Activated naive CD4-positive, alpha-beta T cell treated with anti-CD3 and anti-CD28 coated beads for 36 hours (primary cell): ENCODE measurements at regions of chr20 and their contacts with region 1.

Region 1: DNA sequence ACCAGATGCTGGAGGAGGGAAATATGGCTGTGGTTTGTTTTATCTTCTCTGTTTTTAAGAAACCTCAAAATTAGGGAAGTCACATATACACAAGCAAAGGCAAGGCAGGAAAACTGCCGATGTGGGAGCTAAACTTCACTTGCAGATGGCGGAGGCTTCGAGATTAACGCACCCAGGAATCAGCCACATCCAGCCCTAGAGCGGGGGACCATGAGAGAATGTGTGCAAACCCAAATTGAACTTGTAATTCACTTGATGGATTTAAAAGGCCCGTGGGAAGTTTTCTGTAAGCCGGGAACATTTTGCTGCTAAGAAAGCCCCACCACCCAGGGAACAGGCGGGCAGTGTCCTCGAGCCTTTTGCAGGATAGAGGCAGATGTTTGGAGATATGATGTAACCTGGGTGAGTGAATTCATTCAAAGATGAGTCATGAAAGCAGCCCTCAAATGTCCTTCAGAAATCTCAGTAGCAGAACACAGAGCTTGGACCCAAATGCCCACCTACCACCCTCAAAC is 39.9 kb downstream of the PREX1 start:
- DNase-seq: no peak
- H3K4me3 Mint-ChIP-seq: no peak overlapping the region
- H3K27ac Mint-ChIP-seq: no peak overlapping the region
- H3K4me1 Mint-ChIP-seq: peaks cover 50% of the 10 kb centered on the region
- H3K27me3 Mint-ChIP-seq: peaks cover 4% of the 10 kb centered on the region

Region 2: DNA sequence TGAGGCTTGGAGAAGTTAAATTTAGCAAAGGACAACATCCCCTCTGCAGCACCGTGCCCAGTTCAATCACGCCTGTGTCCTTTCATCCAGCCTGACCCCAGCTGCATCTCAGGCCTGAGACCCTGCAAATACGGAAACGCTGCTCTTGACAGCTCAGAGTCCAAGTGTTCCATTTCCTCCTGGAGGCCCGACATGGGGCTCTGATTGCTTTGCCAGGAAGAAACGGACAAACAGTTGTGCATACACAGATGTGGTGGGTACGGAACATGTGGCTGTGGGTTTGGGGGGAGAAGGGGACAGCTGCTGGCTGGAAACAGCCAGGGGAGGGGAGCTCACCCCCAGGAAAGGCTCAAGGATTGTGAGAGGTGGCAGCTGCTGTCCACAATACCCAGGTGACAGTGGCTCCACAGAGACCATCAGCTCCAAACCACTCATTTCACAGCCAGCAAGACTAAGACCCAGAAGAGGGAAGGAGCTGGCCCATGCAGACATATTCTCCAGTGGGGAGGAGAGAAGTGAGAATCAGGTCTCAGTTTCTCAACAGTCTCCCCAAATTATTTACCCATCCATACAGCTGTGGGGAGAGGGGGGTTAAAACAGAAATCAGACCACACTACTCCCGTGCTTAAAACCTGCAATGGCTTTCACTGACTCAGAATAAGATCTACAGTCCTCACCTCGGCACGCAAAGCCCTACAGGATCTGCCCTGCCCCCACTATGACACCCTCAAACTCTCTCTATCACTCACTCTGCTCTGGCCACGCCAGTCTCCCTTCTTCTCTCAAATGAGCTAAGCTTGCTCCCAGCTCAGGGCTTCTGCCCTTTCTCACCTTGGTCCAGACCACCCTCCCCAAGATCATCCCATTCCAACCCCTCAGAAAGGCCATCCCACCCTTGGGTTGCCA is 49.3 kb before region 1 on chr20:
- CTCF ChIA-PET with region 1: interaction called, 3 read pairs
- intact Hi-C with region 1: loop called (anchors 5 kb)
- DNase-seq: peak; percentile 88
- H3K4me3 Mint-ChIP-seq: no peak overlapping the region
- H3K27ac Mint-ChIP-seq: peak overlapping the region; percentile 79
- H3K4me1 Mint-ChIP-seq: peaks cover 32% of the 10 kb centered on the region
- H3K27me3 Mint-ChIP-seq: no peaks in the 10 kb centered on the region

Region 3: GRCh38 chr20:48754292-48754691 is 33.6 kb before region 1 on chr20:
- CTCF ChIA-PET with region 1: no interaction called
- intact Hi-C with region 1: no loop called
- DNase-seq: no peak
- H3K4me3 Mint-ChIP-seq: no peak overlapping the region
- H3K27ac Mint-ChIP-seq: no peak overlapping the region
- H3K4me1 Mint-ChIP-seq: peaks cover 51% of the 10 kb centered on the region
- H3K27me3 Mint-ChIP-seq: no peaks in the 10 kb centered on the region

Region 4: GRCh38 chr20:48769069-48769879 is 18.6 kb before region 1 on chr20:
- CTCF ChIA-PET with region 1: interaction called, 3 read pairs
- intact Hi-C with region 1: loop called (anchors 1 kb)
- DNase-seq: peak; percentile 98
- H3K4me3 Mint-ChIP-seq: peak overlapping the region; percentile 64
- H3K27ac Mint-ChIP-seq: peak overlapping the region; percentile 68
- H3K4me1 Mint-ChIP-seq: peaks cover 67% of the 10 kb centered on the region
- H3K27me3 Mint-ChIP-seq: no peaks in the 10 kb centered on the region

Region 5: DNA sequence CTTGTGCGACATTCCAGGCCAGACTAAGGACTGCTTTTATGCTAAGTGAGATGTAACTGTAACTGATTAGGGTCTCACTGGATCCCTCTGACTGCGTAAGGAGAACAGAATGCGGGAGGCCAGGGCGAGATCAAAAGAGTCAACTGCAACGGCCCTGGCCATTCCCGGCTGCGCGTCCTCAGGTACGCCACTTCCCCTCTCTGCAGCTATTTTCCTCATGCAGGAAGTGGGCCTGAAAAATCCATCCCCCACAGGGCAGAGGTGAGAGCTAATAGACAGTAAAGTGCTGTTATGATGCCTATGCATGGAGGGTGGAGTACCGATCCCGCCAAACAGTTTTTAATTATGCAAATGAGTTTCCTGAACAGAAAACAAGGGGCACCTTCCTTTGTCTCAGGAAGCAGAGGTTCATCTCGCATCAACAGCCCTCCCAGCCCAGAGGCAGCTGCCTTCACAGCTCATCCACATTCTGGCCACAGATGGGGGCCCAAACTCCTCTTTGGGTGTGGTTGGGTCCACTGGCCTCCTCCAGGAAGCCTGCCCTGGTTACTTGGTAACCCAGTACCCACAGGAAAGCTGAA is 30.6 kb after region 1 on chr20:
- CTCF ChIA-PET with region 1: no interaction called
- intact Hi-C with region 1: loop called (anchors 1 kb)
- DNase-seq: peak; percentile 81
- H3K4me3 Mint-ChIP-seq: peak overlapping the region; percentile 35
- H3K27ac Mint-ChIP-seq: peak overlapping the region; percentile 84
- H3K4me1 Mint-ChIP-seq: peaks cover 77% of the 10 kb centered on the region
- H3K27me3 Mint-ChIP-seq: no peaks in the 10 kb centered on the region